Heart right ventricle (tissue), 16 donors: ENCODE measurements at regions of chr12 and their contacts with region 1.

Region 1: DNA sequence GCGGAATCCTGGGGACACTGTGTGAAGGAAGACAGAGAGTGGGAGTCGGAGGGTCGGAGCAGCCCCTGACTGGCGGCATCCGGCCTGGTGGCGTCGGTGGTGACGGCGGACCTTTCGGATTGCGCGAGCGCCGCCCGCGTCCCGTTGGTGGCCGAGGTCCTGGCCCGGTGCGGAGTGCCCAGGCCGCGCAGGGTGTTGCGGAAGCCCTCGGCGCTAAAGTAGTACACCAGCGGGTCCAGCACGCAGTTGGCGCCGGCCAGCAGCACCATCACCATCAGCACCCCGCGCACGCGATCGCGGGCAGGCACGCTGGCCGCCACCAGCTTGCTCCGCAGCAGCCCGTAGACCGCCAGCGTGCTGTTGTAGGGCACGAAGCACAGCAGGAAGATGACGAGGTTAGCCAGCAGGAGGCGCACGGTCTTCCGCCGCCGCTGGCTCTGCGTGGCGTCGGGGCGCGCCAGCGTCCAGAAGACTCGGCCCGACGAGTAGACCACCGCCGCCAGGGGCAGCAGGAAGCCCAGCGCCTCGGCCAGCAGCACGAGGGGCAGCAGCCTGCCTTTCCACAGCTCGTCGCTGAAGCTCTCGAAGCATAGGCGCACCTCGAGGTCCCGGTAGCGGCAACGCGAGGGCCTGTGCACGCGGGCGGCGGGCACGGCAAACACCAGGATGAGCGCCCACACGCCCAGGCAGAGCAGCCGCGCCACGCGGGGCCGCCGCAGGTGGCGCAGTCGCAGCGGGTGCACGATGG is 13.1 kb upstream of the CHD4 start:
- DNase-seq: peak in 1 of 2 donors; percentile 72
- ATAC-seq: peak in 5 of 8 donors; percentile 18 to 57 (median 40)
- H3K4me3 ChIP-seq: peak overlapping the region in 8 of 10 donors; percentile 4 to 33 (median 30)
- H3K27ac ChIP-seq: no peak overlapping the region
- H3K4me1 ChIP-seq: peaks cover 0 to 18% (median 8%) of the 10 kb centered on the region in 9 donors
- H3K27me3 ChIP-seq: peaks cover 0 to 14% (median 0%) of the 10 kb centered on the region in 7 donors
- CTCF ChIP-seq: peak; percentile 24 to 74 (median 55)

Region 2: DNA sequence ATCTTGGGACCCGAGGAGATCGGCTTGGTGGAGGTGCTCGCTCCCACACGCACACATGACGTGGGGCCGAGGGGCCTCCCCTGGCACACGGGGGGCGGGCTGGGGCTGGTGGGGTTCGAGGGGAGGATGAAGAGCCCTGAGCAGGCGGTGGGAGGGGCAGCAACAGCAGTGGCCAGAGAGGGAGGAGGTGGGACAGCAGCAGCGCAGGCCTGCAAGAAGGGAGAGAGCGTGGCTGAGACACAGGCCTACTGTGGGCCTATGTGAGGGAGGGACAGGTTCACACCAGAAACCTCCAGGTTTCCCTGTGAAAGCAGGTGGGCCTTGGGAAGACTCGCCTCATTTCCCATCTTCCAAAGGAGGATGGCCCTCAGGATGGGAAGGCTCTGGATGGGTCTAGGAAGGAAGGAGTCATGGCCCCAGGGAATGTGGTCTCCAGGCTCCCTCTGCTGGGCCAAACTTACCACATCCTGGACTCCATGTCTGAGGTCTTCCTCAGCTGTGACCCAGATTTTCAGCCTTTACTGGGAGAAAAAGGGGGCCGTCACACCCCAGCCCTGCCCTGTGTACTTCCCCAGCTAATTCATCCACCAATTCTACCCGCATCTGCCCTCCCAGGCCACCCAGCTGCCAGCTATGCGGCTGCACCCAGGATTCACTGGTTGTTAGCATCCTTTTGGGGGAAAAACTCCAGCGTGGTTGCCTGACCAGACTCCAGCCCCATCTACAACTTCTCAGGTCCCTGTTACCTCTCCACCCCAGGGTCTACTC is 77.5 kb after region 1 on chr12:
- intact Hi-C with region 1: loop called in 2 of 10 experiments (anchors 10 kb)
- DNase-seq: no peak
- ATAC-seq: peak in 7 of 8 donors; percentile 39 to 73 (median 54)
- H3K4me3 ChIP-seq: no peak overlapping the region
- H3K27ac ChIP-seq: no peak overlapping the region
- H3K4me1 ChIP-seq: peaks cover 3 to 16% (median 11%) of the 10 kb centered on the region in 9 donors
- H3K27me3 ChIP-seq: peaks cover 12 to 78% (median 60%) of the 10 kb centered on the region in 7 donors
- CTCF ChIP-seq: peak in 8 of 9 donors; percentile 11 to 57 (median 40)

Region 3: GRCh38 chr12:6778574-6779550 is 158.6 kb after region 1 on chr12:
- intact Hi-C with region 1: loop called in 5 of 10 experiments (anchors 5 kb)
- DNase-seq: peak; percentile 92 to 97
- ATAC-seq: peak; percentile 94 to 97 (median 96)
- H3K4me3 ChIP-seq: peak overlapping the region in 9 of 10 donors; percentile 35 to 60 (median 43)
- H3K27ac ChIP-seq: peak overlapping the region in 9 of 10 donors; percentile 49 to 73 (median 62)
- H3K4me1 ChIP-seq: peaks cover 0 to 30% (median 15%) of the 10 kb centered on the region in 9 donors
- H3K27me3 ChIP-seq: peaks cover 0 to 40% (median 4%) of the 10 kb centered on the region in 7 donors
- CTCF ChIP-seq: peak in 8 of 9 donors; percentile 92 to 97 (median 96)